CD4-positive, alpha-beta T cell (primary cell): ENCODE measurements at regions of chr14 and their contacts with region 1.

Region 1: GRCh38 chr14:80930836-80931389 is 10.6 kb downstream of the CEP128 start:
- DNase-seq: peak in 13 of 14 experiments; percentile 13 to 89 (median 38)
- ATAC-seq: peak; percentile 88
- H3K4me3 ChIP-seq: peak overlapping the region; percentile 9
- H3K4me3 Mint-ChIP-seq: peak overlapping the region; percentile 47
- H3K27ac ChIP-seq: peak overlapping the region in 1 of 2 donors; percentile 47
- H3K27ac Mint-ChIP-seq: peak overlapping the region; percentile 94
- H3K4me1 ChIP-seq: peaks cover 21% of the 10 kb centered on the region
- H3K4me1 Mint-ChIP-seq: peaks cover 62% of the 10 kb centered on the region
- H3K27me3 ChIP-seq: no peaks in the 10 kb centered on the region
- H3K27me3 Mint-ChIP-seq: no peaks in the 10 kb centered on the region
- CTCF ChIP-seq: no peak

Region 2: GRCh38 chr14:80839743-80840142 is 91.2 kb before region 1 on chr14:
- CTCF ChIA-PET with region 1: no interaction called
- POLR2A ChIA-PET with region 1: no interaction called
- intact Hi-C with region 1: no loop called
- DNase-seq: no peak
- ATAC-seq: no peak
- H3K4me3 ChIP-seq: no peak overlapping the region
- H3K4me3 Mint-ChIP-seq: no peak overlapping the region
- H3K27ac ChIP-seq: no peak overlapping the region
- H3K27ac Mint-ChIP-seq: no peak overlapping the region
- H3K4me1 ChIP-seq: no peaks in the 10 kb centered on the region
- H3K4me1 Mint-ChIP-seq: no peaks in the 10 kb centered on the region
- H3K27me3 ChIP-seq: no peaks in the 10 kb centered on the region
- H3K27me3 Mint-ChIP-seq: no peaks in the 10 kb centered on the region
- CTCF ChIP-seq: no peak

Region 3: DNA sequence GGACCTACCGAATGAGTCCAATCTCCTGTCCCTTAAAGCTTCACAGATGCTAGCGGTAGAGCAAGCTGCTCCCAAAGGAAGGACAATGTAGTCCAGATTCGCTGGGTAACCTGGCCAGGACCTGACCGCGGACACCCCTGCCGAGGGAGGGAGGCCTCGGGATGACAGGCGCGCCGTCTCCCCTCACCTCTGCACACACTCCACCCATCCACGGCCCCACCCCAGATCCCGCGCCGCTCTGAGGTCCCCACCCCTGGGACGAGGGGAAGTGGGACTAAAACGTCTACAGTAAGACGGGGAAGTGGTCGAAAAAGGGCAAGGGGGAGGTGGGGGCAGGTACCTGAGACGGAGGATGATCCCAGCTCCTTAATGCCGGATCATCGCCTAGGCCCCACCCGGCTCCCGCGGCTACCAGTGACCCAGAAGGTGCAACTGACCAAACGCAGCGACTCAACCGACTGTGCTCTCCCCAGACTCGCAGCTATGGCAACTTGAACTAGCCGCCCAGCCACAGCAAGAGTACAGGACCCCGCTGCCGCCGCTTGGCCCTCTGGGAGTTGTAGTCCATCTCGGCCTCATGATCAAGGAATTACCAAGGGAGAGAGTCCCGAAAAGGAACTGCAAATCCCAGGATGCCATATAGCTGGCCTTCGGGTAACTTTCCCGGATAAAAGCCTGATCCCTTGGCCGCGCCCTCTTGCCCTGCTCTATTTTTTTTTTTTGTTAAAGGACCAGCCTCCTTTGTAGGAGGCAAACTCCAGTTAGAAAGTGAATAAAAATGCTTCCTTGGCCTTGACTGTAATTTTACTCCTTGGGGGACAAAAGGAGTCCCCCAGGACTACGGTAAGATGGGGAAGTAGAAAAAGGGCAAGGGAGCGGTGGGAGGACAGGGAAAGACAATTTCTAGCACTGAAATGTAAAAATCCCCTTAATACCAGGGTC is 10.6 kb after region 1 on chr14 and contains the start of gene CEP128:
- CTCF ChIA-PET with region 1: interaction called, 3 read pairs
- POLR2A ChIA-PET with region 1: interaction called, 15 read pairs
- intact Hi-C with region 1: loop called in 1 of 2 experiments (anchors 1 kb)
- DNase-seq: peak; percentile 68 to 92 (median 78)
- ATAC-seq: peak; percentile 82
- H3K4me3 ChIP-seq: peak within 1 kb of the TSS; percentile 65
- H3K4me3 Mint-ChIP-seq: peak within 1 kb of the TSS; percentile 93
- H3K27ac ChIP-seq: peak within 1 kb of the TSS; percentile 15 to 18
- H3K27ac Mint-ChIP-seq: peak within 1 kb of the TSS; percentile 87
- H3K4me1 ChIP-seq: peaks cover 17% of the 10 kb centered on the region
- H3K4me1 Mint-ChIP-seq: peaks cover 33% of the 10 kb centered on the region
- H3K27me3 ChIP-seq: no peaks in the 10 kb centered on the region
- H3K27me3 Mint-ChIP-seq: peaks cover 4% of the 10 kb centered on the region
- CTCF ChIP-seq: no peak
- total RNA-seq, gene CEP128: 12.3 to 13.0 TPM

Region 4: DNA sequence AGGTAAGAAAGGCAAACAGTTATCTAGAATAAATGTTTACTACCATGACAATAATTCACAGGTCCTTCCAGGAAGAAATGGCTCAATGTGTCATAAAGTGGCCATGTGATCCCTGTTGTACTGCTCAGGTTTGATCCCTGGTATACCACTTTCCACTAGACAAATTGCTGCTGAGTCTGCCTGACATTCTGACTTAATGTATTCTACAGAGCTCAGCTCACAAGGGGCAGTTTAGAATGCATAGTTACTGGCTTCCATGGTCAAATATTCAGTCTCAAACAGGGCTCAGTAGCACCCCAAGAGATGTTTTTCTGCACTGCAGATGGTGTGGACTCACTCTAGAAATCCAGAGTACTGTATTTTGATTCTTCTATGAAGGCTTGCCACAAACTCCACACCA is 46.3 kb after region 1 on chr14:
- CTCF ChIA-PET with region 1: no interaction called
- POLR2A ChIA-PET with region 1: no interaction called
- intact Hi-C with region 1: no loop called
- DNase-seq: no peak
- ATAC-seq: no peak
- H3K4me3 ChIP-seq: no peak overlapping the region
- H3K4me3 Mint-ChIP-seq: no peak overlapping the region
- H3K27ac ChIP-seq: no peak overlapping the region
- H3K27ac Mint-ChIP-seq: no peak overlapping the region
- H3K4me1 ChIP-seq: peaks cover 7% of the 10 kb centered on the region
- H3K4me1 Mint-ChIP-seq: peaks cover 14% of the 10 kb centered on the region
- H3K27me3 ChIP-seq: no peaks in the 10 kb centered on the region
- H3K27me3 Mint-ChIP-seq: no peaks in the 10 kb centered on the region
- CTCF ChIP-seq: no peak

Region 5: DNA sequence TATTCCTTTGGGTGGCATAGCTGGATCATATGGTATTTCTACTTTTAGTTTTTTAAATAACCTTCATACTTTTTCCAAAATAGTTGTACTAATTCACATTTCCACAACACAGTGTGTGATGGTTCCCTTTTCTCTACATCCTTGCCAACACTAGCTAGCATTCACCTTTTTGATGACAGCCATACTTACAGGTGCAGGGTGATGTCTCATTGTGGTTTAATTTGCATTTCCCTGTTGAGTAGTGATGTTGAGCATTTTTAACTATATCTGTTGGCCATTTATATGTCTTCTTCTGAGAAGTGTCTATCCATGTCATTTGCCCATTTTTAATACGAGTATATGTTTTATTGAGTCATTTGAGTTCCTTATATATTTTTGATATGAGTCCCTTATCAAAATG is 120.6 kb after region 1 on chr14:
- CTCF ChIA-PET with region 1: no interaction called
- POLR2A ChIA-PET with region 1: no interaction called
- intact Hi-C with region 1: no loop called
- DNase-seq: no peak
- ATAC-seq: no peak
- H3K4me3 ChIP-seq: no peak overlapping the region
- H3K4me3 Mint-ChIP-seq: no peak overlapping the region
- H3K27ac ChIP-seq: no peak overlapping the region
- H3K27ac Mint-ChIP-seq: no peak overlapping the region
- H3K4me1 ChIP-seq: no peaks in the 10 kb centered on the region
- H3K4me1 Mint-ChIP-seq: no peaks in the 10 kb centered on the region
- H3K27me3 ChIP-seq: no peaks in the 10 kb centered on the region
- H3K27me3 Mint-ChIP-seq: no peaks in the 10 kb centered on the region
- CTCF ChIP-seq: no peak